AG04450 (cell line): ENCODE measurements at regions of chr5 and their contacts with region 1.

Region 1: GRCh38 chr5:149434162-149435014 is 55.3 kb upstream of the IL17B start:
- DNase-seq: peak; percentile 76
- H3K4me3 ChIP-seq: no peak overlapping the region
- H3K27ac ChIP-seq: peak overlapping the region; percentile 84
- H3K27me3 ChIP-seq: no peaks in the 10 kb centered on the region
- CTCF ChIP-seq: peak; percentile 91

Region 2: GRCh38 chr5:149317281-149318048 is 116.9 kb before region 1 on chr5:
- CTCF ChIA-PET with region 1: interaction called, 16 read pairs
- POLR2A ChIA-PET with region 1: no interaction called
- DNase-seq: peak; percentile 33
- H3K4me3 ChIP-seq: no peak overlapping the region
- H3K27ac ChIP-seq: no peak overlapping the region
- H3K27me3 ChIP-seq: no peaks in the 10 kb centered on the region
- CTCF ChIP-seq: peak; percentile 75

Region 3: DNA sequence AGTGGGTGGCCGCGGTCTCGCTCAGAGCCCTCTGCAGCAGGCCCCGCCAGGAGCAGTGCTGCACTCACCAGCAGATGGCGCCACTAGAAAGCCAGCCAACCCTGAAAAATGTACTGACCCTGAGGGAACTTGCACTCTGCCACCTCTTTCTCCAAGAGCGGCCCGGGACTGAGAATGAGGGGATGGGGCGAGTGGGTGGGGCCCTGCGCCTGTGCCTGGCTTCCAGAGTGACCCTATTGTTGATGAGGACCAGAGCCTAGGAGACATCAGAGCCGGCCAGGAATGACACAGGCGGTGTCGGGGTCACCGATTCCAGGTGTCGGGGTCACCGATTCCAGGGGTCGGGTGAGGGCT is 52.4 kb before region 1 on chr5:
- CTCF ChIA-PET with region 1: interaction called, 138 read pairs
- POLR2A ChIA-PET with region 1: interaction called, 16 read pairs
- DNase-seq: no peak
- H3K4me3 ChIP-seq: no peak overlapping the region
- H3K27ac ChIP-seq: no peak overlapping the region
- H3K27me3 ChIP-seq: no peaks in the 10 kb centered on the region
- CTCF ChIP-seq: peak; percentile 96

Region 4: GRCh38 chr5:149397530-149397929 is 36.9 kb before region 1 on chr5:
- CTCF ChIA-PET with region 1: no interaction called
- POLR2A ChIA-PET with region 1: no interaction called
- DNase-seq: no peak
- H3K4me3 ChIP-seq: no peak overlapping the region
- H3K27ac ChIP-seq: no peak overlapping the region
- H3K27me3 ChIP-seq: no peaks in the 10 kb centered on the region
- CTCF ChIP-seq: no peak

Region 5: DNA sequence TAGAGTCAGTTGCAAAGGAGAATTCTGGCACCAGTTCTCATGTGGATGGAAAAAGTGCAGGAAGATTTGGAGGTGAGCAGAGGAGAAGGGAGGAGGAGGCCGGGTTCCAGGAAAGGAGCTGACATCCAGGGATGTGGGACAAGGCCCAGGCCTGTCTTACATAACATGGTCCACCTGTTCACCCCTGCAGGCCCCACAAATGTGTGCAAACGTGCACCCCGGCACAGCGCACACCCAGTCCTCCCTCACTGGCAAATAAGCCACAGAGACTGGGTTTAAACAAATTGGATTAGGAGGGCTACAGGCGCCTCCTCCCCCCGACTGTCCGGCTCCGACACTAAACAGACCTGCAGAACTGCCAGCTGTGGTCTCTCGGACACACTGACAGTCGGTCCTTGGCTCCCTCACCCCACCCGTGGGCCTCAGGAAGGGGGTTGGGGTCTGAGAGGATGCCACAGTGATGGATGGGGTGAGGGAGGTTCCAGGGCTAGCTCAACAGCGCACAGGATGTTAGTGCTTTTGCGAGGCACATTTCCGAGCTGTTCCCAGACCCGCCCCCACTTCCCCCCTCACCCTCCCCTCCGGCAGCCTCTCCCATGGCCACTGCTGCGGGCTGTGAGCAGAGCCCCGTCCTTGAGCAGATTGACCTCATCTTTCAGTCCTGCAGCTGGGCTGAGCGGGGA is 11.9 kb before region 1 on chr5:
- CTCF ChIA-PET with region 1: interaction called, 15 read pairs
- POLR2A ChIA-PET with region 1: interaction called, 22 read pairs
- DNase-seq: peak; percentile 95
- H3K4me3 ChIP-seq: peak overlapping the region; percentile 11
- H3K27ac ChIP-seq: peak overlapping the region; percentile 95
- H3K27me3 ChIP-seq: no peaks in the 10 kb centered on the region
- CTCF ChIP-seq: no peak

Region 6: GRCh38 chr5:149561848-149562247 is 127.5 kb after region 1 on chr5:
- CTCF ChIA-PET with region 1: interaction called, 48 read pairs
- POLR2A ChIA-PET with region 1: interaction called, 12 read pairs
- DNase-seq: peak; percentile 84
- H3K4me3 ChIP-seq: no peak overlapping the region; the same call in 1 of the 2 replicates
- H3K27ac ChIP-seq: peak overlapping the region; percentile 90
- H3K27me3 ChIP-seq: no peaks in the 10 kb centered on the region
- CTCF ChIP-seq: no peak

Region 7: GRCh38 chr5:149618581-149619251 is 184.3 kb after region 1 on chr5:
- CTCF ChIA-PET with region 1: interaction called, 15 read pairs
- POLR2A ChIA-PET with region 1: interaction called, 3 read pairs
- DNase-seq: peak; percentile 24
- H3K4me3 ChIP-seq: no peak overlapping the region
- H3K27ac ChIP-seq: no peak overlapping the region
- H3K27me3 ChIP-seq: peaks cover 13% of the 10 kb centered on the region
- CTCF ChIP-seq: peak; percentile 79